ENCODE measurements at regions of chr2 and their contacts with region 1.

Region 1: DNA sequence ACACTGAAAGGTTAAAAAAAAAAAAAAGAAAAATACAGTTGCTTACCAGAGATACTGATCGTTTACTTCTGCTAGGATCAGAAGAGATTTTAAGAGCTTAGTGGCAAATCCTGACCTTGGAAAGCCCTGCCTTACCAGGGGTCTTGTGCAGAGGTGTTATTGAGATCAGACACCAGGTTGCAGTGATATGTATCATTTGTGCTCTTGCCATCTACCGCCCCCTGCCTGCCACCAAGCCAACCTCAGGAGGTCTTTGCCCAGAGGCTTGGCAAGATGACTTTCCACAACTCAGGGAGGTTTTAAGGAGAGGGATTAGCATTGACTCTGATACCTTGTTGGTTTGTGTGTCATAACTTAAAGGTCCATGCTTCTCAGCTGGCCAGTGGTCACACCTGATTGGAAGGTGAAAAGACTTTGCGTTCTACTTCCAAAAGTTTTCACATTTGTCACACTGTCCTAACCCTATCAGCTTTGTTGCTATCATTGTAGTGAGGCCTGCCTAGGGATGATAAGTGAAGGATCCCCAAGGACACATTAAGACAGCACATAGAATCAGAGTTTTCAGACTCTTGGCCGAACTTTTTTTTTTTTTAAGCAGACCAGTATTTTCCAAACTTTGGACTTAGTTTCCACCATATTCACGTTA is 46.2 kb upstream of the MGAT5 start:
- DNase-seq: peak; percentile 68 to 81 (median 78)
- H3K4me3 ChIP-seq: no peak overlapping the region
- H3K27ac ChIP-seq: no peak overlapping the region
- H3K4me1 ChIP-seq: peaks cover 3 to 23% (median 8%) of the 10 kb centered on the region in 4 experiments
- H3K27me3 ChIP-seq: no peaks in the 10 kb centered on the region

Region 2: DNA sequence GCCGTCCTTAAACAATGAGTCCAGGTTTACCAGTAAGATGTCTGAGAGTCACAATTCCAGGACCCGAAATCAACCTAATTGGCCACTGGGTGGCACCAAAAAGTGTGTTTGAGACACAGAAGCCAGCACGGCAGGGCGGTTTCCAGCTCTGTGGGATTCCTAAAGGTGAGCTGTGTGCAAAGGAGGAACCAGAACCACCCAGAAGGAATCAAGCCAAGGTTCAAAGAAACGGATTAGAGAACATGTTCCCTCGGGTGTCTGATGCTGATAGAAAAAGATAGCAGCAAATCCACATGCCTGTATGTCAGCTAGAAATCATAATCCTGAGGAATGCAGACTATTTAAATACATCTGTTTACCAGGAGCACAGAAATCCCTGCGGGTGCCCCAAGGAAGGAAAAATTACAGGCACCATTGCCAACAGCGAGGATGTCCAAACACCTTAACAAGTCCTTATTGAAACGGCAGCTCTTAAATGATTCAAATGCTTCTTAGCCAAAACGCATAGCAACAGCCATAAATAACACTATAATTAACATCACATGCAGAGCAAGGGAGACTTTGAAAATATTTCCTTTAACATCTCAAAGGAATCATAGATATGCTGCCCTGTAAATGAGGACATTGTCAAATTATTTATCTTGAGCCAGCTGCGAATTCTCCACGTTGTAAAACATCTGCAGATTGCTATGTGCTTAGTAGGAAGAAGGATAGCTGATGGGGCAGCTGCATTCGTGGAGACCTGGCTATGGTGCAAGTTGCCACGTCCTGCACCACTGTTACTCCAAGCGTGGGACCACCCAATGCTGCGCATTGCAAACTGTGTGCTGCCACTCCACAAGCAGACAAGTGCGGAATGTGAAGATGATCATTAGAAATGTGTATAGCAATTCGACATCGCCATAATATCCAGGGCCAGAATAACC is 320.7 kb before region 1 on chr2:
- CTCF ChIA-PET with region 1: interaction called, 14 read pairs
- POLR2A ChIA-PET with region 1: no interaction called
- DNase-seq: peak; percentile 49 to 67 (median 63)
- H3K4me3 ChIP-seq: no peak overlapping the region
- H3K27ac ChIP-seq: no peak overlapping the region
- H3K4me1 ChIP-seq: no peaks in the 10 kb centered on the region
- H3K27me3 ChIP-seq: peaks cover 0 to 6% (median 2%) of the 10 kb centered on the region in 5 experiments

Region 3: GRCh38 chr2:134148843-134149472 is 58.7 kb before region 1 on chr2:
- CTCF ChIA-PET with region 1: interaction called, 10 read pairs
- POLR2A ChIA-PET with region 1: interaction called, 3 read pairs
- DNase-seq: peak; percentile 14 to 76 (median 59)
- H3K4me3 ChIP-seq: no peak overlapping the region
- H3K27ac ChIP-seq: peak overlapping the region in 1 of 2 experiments; percentile 46
- H3K4me1 ChIP-seq: peaks cover 5 to 16% (median 12%) of the 10 kb centered on the region in 4 experiments
- H3K27me3 ChIP-seq: no peaks in the 10 kb centered on the region

Region 4: DNA sequence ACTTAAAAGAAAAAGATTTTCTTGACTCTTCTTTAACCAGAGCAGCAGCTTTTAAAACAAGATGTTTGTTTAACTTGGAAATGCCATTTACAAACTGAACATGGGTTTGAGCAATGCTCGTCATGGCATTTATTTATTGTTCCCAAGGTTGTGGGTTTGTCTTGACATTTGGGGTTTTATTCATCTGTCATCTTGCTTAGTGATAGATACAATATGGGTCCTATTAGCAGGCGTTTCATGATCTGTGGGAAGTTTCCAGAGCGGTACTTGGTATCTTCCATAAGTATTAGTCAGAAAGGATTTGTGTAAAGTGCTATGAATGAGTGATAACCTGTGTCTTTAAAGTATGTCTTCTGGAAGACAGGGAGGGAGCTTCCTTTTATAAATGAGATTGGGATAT is 16.3 kb after region 1 on chr2:
- CTCF ChIA-PET with region 1: interaction called, 18 read pairs
- POLR2A ChIA-PET with region 1: no interaction called
- DNase-seq: no peak
- H3K4me3 ChIP-seq: no peak overlapping the region
- H3K27ac ChIP-seq: no peak overlapping the region
- H3K4me1 ChIP-seq: peaks cover 7 to 21% (median 12%) of the 10 kb centered on the region in 4 experiments
- H3K27me3 ChIP-seq: no peaks in the 10 kb centered on the region

Region 5: GRCh38 chr2:134238371-134238770 is 30.7 kb after region 1 on chr2:
- CTCF ChIA-PET with region 1: interaction called, 20 read pairs
- POLR2A ChIA-PET with region 1: no interaction called
- DNase-seq: no peak
- H3K4me3 ChIP-seq: no peak overlapping the region
- H3K27ac ChIP-seq: no peak overlapping the region
- H3K4me1 ChIP-seq: peaks cover 12 to 15% (median 13%) of the 10 kb centered on the region in 4 experiments
- H3K27me3 ChIP-seq: no peaks in the 10 kb centered on the region

Region 6: DNA sequence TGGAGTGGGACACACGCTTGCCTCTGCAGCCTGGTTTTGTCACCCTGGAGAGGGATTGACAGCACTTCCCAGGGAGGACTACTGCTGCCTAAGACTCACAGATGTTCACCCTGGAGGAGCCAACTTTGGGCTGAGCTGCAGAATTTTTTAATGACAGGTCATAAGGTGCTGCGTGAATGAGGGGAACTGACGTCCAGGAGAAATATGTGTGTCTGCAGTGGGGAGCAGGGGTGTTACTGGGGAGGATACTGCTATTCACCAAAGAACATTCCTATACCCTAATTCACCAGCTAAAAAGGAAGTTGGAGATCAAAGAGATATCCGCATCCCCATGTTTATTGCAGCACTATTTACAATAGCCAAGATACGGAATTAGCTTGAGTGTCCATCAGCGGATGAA is 190.6 kb after region 1 on chr2:
- CTCF ChIA-PET with region 1: no interaction called
- POLR2A ChIA-PET with region 1: no interaction called
- DNase-seq: no peak
- H3K4me3 ChIP-seq: no peak overlapping the region
- H3K27ac ChIP-seq: no peak overlapping the region
- H3K4me1 ChIP-seq: peaks cover 0 to 7% (median 0%) of the 10 kb centered on the region in 4 experiments
- H3K27me3 ChIP-seq: no peaks in the 10 kb centered on the region

Region 7: DNA sequence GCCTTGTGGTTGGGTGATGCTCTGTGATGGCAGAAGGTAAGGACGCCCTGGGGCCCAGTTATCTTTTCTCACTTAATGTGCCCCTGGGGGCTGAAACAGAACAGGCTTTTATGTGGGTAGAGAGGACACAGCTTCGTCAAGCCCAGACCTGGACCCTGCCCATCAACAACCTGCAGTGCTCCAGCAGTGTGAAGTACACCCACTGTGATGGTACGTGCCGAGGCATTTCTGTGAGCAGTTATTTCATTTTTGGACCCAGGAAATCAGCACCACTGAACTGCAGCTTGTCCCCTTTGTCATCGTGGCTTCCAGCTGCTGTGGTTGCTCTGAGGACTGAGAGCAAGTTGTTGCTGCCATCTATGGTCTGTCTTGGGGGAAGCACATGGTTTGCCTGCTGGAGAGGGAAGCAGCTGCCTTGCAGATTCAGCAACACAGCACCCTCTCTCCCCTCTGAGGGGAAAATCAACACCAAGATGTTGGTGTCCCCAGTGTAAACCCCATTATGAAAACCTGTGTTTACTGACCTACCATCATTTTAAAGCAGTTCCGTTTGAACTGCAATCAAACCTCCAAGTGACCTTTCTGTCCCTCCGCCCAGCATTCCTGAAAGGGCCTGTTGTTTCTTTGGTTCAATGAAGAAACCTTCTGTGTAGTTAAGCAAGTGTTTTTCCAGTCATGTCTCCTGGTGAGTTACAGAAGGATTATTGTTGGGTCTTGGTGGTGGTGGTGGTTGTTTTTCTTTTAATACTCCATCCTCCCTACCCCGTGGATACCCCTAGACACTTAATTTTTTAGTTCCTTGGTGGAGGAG is 204.3 kb after region 1 on chr2:
- CTCF ChIA-PET with region 1: interaction called, 14 read pairs
- POLR2A ChIA-PET with region 1: no interaction called
- DNase-seq: peak; percentile 78 to 91 (median 90)
- H3K4me3 ChIP-seq: no peak overlapping the region
- H3K27ac ChIP-seq: no peak overlapping the region
- H3K4me1 ChIP-seq: peaks cover 6 to 14% (median 8%) of the 10 kb centered on the region in 4 experiments
- H3K27me3 ChIP-seq: no peaks in the 10 kb centered on the region

Measured in common myeloid progenitor, CD34-positive (primary cell).